BJ (cell line): ENCODE measurements at regions of chr1 and their contacts with region 1.

Region 1: GRCh38 chr1:40153073-40153770 is 8.0 kb upstream of the RLF start:
- DNase-seq: no peak
- H3K4me3 ChIP-seq: no peak overlapping the region
- H3K27me3 ChIP-seq: peaks cover 6% of the 10 kb centered on the region; the same call in 1 of the 2 replicates
- CTCF ChIP-seq: peak; percentile 75

Region 2: DNA sequence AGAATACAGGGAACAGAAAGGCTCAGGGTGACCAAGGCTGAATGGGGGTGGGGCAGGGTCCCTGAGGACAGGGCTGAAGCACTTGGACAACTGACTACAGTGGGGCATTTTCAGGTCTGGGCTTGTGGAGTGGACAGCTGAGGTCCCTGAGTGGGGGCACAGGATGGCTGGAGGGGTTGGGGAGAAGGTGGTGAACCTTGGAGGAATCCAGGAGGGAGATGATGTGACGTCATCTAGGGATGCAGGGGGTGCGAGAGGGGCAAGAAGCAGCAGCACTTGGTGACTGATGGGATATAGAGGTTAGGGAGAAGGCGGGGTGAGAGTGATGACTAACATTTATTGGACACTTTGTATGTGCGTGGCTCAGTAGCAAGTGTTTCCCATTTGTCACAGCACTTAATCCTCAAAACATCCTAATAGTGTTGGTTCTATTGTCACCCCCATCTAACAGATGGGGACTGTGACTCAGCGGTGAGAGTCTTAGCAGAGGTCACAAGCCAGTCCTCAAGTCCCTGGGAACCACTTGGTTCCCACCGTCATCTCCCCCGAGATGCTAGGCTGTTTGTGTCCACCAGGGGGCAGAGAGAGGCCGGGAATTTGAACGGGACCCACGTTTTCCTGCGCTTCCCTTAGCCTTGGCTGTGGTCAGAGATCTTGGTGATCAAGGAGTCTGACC is 336.7 kb before region 1 on chr1:
- CTCF ChIA-PET with region 1: no interaction called
- POLR2A ChIA-PET with region 1: no interaction called
- DNase-seq: peak; percentile 65
- H3K4me3 ChIP-seq: no peak overlapping the region
- H3K27me3 ChIP-seq: peaks cover 3% of the 10 kb centered on the region
- CTCF ChIP-seq: peak; percentile 78

Region 3: DNA sequence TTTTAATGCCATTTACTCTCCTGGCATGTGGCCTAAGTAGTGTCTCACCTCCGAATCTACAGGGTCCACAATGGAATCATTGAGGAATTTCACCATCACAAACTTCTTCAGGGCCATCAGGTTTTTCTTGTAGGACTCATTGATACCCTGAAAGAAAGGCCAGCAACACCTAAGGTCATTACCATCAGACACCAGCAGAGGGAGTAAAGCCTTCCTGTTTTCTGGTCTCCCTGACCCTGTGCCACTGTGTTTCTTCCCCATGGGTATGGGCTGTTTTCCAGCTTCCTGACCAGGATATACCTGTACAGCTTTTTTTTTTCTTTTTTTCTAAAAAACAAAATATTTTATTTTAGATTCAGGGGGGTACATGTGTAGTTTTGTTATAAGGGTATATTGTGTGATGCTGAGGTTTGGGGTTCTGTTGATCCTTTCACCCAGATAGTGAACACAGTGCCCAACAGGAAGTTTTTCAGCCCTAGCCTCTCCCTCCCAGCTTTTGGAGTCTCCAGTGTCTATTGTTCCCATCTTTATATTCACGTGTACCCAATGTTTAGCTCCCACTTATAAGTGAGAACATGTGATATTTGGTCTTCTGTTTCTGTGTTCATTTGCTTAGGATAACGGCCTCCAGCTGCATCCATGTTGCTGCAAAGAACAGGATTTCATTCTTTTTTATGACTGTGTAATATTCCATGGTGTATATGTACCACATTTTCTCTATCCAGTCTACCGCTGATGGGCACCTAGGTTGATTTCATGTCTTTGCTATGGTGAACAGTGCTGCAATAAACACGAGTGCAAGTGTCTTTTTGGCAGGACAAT is 74.5 kb before region 1 on chr1:
- CTCF ChIA-PET with region 1: interaction called, 14 read pairs
- POLR2A ChIA-PET with region 1: no interaction called
- DNase-seq: no peak
- H3K4me3 ChIP-seq: no peak overlapping the region
- H3K27me3 ChIP-seq: no peaks in the 10 kb centered on the region
- CTCF ChIP-seq: peak; percentile 82

Region 4: GRCh38 chr1:40291293-40291692 is 138.1 kb after region 1 on chr1:
- CTCF ChIA-PET with region 1: interaction called, 12 read pairs
- POLR2A ChIA-PET with region 1: no interaction called
- DNase-seq: no peak
- H3K4me3 ChIP-seq: no peak overlapping the region
- H3K27me3 ChIP-seq: no peaks in the 10 kb centered on the region
- CTCF ChIP-seq: no peak

Region 5: DNA sequence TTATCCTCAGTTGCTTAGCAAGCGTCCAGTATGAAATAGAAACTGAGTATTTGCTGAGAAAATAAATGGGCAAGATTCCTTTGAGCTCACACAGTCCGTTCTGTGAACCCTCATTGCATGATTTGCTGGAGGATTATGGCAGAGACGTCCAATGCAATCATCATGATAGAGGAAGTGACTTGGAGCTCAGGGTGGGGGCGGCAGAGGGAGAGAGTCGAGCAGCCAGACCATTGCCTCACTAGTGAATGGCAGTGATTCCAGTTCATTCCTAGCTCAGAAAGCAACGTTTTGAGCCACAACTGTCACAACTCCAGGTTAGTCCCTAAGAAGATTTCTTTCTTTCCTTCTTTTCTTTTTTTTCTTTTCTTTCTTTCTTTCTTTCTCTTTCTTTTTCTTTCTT is 191.4 kb after region 1 on chr1:
- CTCF ChIA-PET with region 1: interaction called, 207 read pairs
- POLR2A ChIA-PET with region 1: no interaction called
- DNase-seq: peak; percentile 4
- H3K4me3 ChIP-seq: no peak overlapping the region
- H3K27me3 ChIP-seq: peaks cover 2% of the 10 kb centered on the region
- CTCF ChIP-seq: no peak

Region 6: GRCh38 chr1:40404670-40405462 is 251.6 kb after region 1 on chr1:
- CTCF ChIA-PET with region 1: interaction called, 85 read pairs
- POLR2A ChIA-PET with region 1: no interaction called
- DNase-seq: no peak
- H3K4me3 ChIP-seq: no peak overlapping the region
- H3K27me3 ChIP-seq: no peaks in the 10 kb centered on the region
- CTCF ChIP-seq: peak; percentile 78